MCF 10A (cell line): ENCODE measurements at regions of chr7 and their contacts with region 1.

Region 1: GRCh38 chr7:95916573-95917297 is 144.4 kb downstream of the DYNC1I1 start:
- DNase-seq: peak; percentile 77
- H3K4me3 Mint-ChIP-seq: peak overlapping the region; percentile 24
- H3K27ac Mint-ChIP-seq: no peak overlapping the region
- H3K4me1 Mint-ChIP-seq: no peaks in the 10 kb centered on the region
- H3K27me3 Mint-ChIP-seq: peaks cover 83% of the 10 kb centered on the region
- CTCF ChIP-seq: peak; percentile 75

Region 2: GRCh38 chr7:95772298-95772770 is 144.4 kb before region 1 on chr7 and contains the start of gene DYNC1I1:
- CTCF ChIA-PET with region 1: no interaction called
- POLR2A ChIA-PET with region 1: no interaction called
- intact Hi-C with region 1: no loop called
- DNase-seq: peak; percentile 66
- H3K4me3 Mint-ChIP-seq: peak within 1 kb of the TSS; percentile 77
- H3K27ac Mint-ChIP-seq: no peak within 1 kb of the TSS
- H3K4me1 Mint-ChIP-seq: no peaks in the 10 kb centered on the region
- H3K27me3 Mint-ChIP-seq: peaks cover 15% of the 10 kb centered on the region
- CTCF ChIP-seq: no peak
- total RNA-seq, gene DYNC1I1: not detected in 2 replicates

Region 3: GRCh38 chr7:95905165-95905564 is 11.6 kb before region 1 on chr7:
- CTCF ChIA-PET with region 1: interaction called, 25 read pairs
- POLR2A ChIA-PET with region 1: interaction called, 4 read pairs
- intact Hi-C with region 1: no loop called
- DNase-seq: peak; percentile 26
- H3K4me3 Mint-ChIP-seq: no peak overlapping the region
- H3K27ac Mint-ChIP-seq: no peak overlapping the region
- H3K4me1 Mint-ChIP-seq: no peaks in the 10 kb centered on the region
- H3K27me3 Mint-ChIP-seq: peaks cover 41% of the 10 kb centered on the region
- CTCF ChIP-seq: no peak

Region 4: GRCh38 chr7:95993380-95993779 is 76.6 kb after region 1 on chr7:
- CTCF ChIA-PET with region 1: no interaction called
- POLR2A ChIA-PET with region 1: no interaction called
- intact Hi-C with region 1: no loop called
- DNase-seq: no peak
- H3K4me3 Mint-ChIP-seq: no peak overlapping the region
- H3K27ac Mint-ChIP-seq: no peak overlapping the region
- H3K4me1 Mint-ChIP-seq: no peaks in the 10 kb centered on the region
- H3K27me3 Mint-ChIP-seq: peaks cover 66% of the 10 kb centered on the region
- CTCF ChIP-seq: no peak

Region 5: DNA sequence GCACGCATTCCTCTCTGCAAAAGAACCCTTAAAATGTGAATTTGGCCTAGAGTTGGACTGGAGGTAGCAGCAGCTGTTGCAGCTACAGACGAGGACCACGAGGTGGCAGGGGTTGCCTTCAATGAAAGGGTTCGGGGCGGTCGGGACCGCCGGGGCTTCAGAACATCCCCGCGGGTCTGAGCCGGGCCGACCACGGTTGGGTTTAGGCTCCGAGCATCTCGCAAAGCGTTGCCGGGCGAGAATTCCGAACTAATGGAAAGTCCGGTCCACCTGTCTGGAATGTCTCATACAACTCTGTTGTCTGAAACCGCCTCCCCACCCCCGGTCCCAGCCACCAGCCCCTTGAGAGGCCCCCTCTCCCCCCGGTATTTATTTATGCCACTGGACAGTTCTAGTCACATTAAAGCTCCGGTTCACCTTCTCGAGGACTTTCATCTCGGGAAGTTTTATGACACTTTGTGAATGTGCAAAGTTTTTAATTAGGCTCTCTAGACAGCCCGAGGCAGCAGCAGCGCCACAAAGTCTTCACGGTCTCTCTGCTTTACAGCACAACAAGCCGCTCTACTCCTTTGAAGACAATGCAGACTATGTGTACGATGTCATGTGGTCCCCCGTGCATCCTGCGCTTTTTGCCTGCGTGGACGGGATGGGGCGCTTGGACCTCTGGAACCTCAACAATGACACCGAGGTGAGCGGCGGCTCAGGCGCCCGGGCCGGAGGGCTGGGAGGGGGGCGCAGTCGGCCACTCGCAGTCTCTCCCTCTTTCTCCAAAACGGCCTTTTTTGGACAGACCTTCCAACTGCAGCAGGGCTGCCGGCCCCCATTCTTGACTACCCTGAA is 159.0 kb after region 1 on chr7:
- CTCF ChIA-PET with region 1: interaction called, 4 read pairs
- POLR2A ChIA-PET with region 1: no interaction called
- intact Hi-C with region 1: loop called (anchors 5 kb)
- DNase-seq: peak; percentile 57
- H3K4me3 Mint-ChIP-seq: peak overlapping the region; percentile 62
- H3K27ac Mint-ChIP-seq: no peak overlapping the region
- H3K4me1 Mint-ChIP-seq: peaks cover 7% of the 10 kb centered on the region
- H3K27me3 Mint-ChIP-seq: peaks cover 75% of the 10 kb centered on the region
- CTCF ChIP-seq: peak; percentile 91

Region 6: DNA sequence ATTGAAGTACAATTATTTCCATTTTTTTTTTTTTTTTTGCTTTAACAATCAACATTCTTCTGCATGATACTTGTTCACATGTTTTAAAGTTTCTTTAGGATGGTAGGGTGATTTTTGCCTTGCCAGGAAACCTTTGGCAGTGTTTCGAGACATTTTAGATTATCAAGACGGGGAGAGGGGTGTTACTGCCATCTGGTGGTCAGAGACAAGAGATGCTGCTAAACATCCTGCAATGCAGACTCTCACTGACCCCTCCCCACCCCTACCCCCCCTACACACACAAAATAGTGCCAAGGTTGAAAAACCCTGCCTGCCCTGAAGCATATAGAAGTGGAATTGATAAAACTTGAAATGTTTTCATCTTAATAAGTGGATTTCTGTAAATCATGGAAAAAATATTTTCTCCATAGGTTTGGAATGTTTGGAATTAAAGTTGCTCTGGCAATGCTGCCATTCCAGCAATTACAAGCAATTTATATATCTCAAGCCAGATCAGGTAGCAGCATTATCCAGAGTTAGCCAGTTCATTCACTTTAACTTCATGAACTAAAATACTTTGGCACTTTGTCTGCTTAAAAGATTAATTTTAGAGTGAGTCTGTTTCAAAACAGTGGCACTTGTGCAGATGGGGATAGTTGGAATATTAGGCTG is 1262.8 kb after region 1 on chr7:
- CTCF ChIA-PET with region 1: interaction called, 3 read pairs
- POLR2A ChIA-PET with region 1: no interaction called
- intact Hi-C with region 1: loop called (anchors 2 kb)
- DNase-seq: peak; percentile 77
- H3K4me3 Mint-ChIP-seq: no peak overlapping the region
- H3K27ac Mint-ChIP-seq: no peak overlapping the region
- H3K4me1 Mint-ChIP-seq: peaks cover 4% of the 10 kb centered on the region
- H3K27me3 Mint-ChIP-seq: no peaks in the 10 kb centered on the region
- CTCF ChIP-seq: peak; percentile 74